ENCODE measurements at regions of chr6 and their contacts with region 1.

Region 1: GRCh38 chr6:25017932-25018567 is 82.3 kb upstream of the RIPOR2 start:
- DNase-seq: peak; percentile 93
- H3K4me3 Mint-ChIP-seq: peak overlapping the region; percentile 6
- H3K27ac Mint-ChIP-seq: peak overlapping the region; percentile 84
- H3K4me1 Mint-ChIP-seq: peaks cover 55% of the 10 kb centered on the region
- H3K27me3 Mint-ChIP-seq: no peaks in the 10 kb centered on the region

Region 2: DNA sequence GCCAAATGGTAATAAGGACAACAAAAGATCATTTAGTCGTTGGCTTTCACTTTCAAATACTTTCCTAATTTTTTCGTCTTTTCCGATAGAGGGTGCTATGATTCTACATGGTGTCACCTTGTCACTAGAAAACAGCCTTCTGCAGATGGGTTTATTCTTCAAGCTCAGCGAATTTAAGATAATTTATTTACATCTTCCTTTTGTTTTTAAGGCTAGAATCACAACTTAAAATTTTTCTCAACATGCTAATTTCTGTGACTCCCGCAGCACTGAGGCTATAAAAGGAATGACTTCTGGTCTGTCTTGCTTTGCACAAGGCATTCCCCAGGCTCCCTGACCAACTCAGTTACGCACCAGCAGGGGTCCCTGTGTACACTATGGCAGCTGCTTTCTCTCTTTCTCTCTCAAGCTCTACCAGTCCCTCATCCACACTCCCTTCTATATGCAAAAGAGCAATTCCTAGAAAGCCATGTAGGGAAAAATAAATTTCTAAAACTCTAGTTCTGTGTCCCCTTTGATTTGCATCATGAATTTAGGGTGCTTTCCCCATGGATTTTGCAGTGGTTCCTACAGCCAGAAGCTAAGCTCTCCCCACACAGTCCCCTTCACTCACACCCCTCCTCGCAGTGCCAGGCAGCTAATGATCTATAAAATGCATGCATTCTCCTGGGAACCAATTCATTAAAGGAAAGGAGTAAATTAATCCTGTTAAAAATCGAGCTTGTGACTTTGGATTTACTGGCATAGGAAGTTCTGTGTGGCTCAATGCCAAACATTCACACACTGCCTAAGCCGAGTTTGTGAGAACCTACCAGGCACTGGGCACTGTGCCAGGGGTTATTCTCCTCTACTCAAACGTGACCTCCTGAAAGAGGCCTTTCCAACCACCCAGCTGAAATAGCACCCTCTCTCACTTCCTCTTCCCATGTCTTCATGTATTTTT is 734.7 kb before region 1 on chr6:
- CTCF ChIA-PET with region 1: no interaction called
- intact Hi-C with region 1: loop called (anchors 5 kb)
- DNase-seq: peak; percentile 62
- H3K4me3 Mint-ChIP-seq: no peak overlapping the region
- H3K27ac Mint-ChIP-seq: no peak overlapping the region
- H3K4me1 Mint-ChIP-seq: peaks cover 6% of the 10 kb centered on the region
- H3K27me3 Mint-ChIP-seq: peaks cover 3% of the 10 kb centered on the region

Region 3: GRCh38 chr6:24520929-24521546 is 497.0 kb before region 1 on chr6:
- CTCF ChIA-PET with region 1: no interaction called
- intact Hi-C with region 1: loop called (anchors 10 kb)
- DNase-seq: peak; percentile 62
- H3K4me3 Mint-ChIP-seq: no peak overlapping the region
- H3K27ac Mint-ChIP-seq: no peak overlapping the region
- H3K4me1 Mint-ChIP-seq: peaks cover 8% of the 10 kb centered on the region
- H3K27me3 Mint-ChIP-seq: no peaks in the 10 kb centered on the region

Region 4: GRCh38 chr6:24699521-24700359 is 318.3 kb before region 1 on chr6:
- CTCF ChIA-PET with region 1: no interaction called
- intact Hi-C with region 1: loop called (anchors 1 kb)
- DNase-seq: no peak
- H3K4me3 Mint-ChIP-seq: no peak overlapping the region
- H3K27ac Mint-ChIP-seq: peak overlapping the region; percentile 84
- H3K4me1 Mint-ChIP-seq: peaks cover 45% of the 10 kb centered on the region
- H3K27me3 Mint-ChIP-seq: no peaks in the 10 kb centered on the region

Region 5: DNA sequence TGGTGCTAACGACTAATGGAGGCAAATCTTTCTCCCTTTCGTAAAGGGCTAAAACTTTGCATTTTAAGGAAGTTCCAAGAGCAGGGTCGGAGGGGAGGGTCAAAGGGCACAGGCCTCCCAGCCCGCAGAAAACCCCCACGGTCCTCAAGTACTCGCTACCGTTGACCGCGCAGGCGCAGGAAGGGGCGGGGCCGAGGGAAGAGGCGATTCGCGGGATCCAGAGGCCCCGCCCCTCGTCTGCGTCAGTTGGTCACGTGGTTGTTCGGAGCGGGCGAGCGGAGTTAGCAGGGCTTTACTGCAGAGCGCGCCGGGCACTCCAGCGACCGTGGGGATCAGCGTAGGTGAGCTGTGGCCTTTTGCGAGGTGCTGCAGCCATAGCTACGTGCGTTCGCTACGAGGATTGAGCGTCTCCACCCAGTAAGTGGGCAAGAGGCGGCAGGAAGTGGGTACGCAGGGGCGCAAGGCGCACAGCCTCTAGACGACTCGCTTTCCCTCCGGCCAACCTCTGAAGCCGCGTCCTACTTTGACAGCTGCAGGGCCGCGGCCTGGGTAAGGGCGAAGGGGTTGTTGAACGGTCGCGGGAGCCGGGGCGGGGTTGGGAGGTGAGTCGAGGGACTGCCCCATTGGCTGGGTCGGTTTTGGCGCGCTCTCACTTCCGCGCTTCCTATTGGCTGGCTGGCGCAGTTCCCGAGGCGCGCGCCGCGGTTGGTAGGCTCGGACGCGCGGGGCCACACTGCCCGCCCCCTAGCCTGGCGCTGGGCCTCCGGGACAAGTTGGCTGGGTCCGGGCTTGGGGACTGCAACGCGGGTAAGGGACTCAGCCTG is 243.1 kb before region 1 on chr6 and contains the start of gene GMNN:
- CTCF ChIA-PET with region 1: interaction called, 7 read pairs
- intact Hi-C with region 1: loop called (anchors 1 kb)
- DNase-seq: peak; percentile 99
- H3K4me3 Mint-ChIP-seq: peak within 1 kb of the TSS; percentile 96
- H3K27ac Mint-ChIP-seq: peak within 1 kb of the TSS; percentile 98
- H3K4me1 Mint-ChIP-seq: peaks cover 30% of the 10 kb centered on the region
- H3K27me3 Mint-ChIP-seq: no peaks in the 10 kb centered on the region
- total RNA-seq, gene GMNN: 84.9 to 85.1 TPM

Region 6: GRCh38 chr6:24910961-24911712 is 106.9 kb before region 1 on chr6:
- CTCF ChIA-PET with region 1: interaction called, 32 read pairs
- intact Hi-C with region 1: no loop called
- DNase-seq: peak; percentile 70
- H3K4me3 Mint-ChIP-seq: peak overlapping the region; percentile 92
- H3K27ac Mint-ChIP-seq: peak overlapping the region; percentile 96
- H3K4me1 Mint-ChIP-seq: peaks cover 76% of the 10 kb centered on the region
- H3K27me3 Mint-ChIP-seq: no peaks in the 10 kb centered on the region

Region 7: GRCh38 chr6:25006565-25007001 is 11.5 kb before region 1 on chr6:
- CTCF ChIA-PET with region 1: interaction called, 17 read pairs
- intact Hi-C with region 1: loop called (anchors 1 kb)
- DNase-seq: peak; percentile 72
- H3K4me3 Mint-ChIP-seq: peak overlapping the region; percentile 31
- H3K27ac Mint-ChIP-seq: peak overlapping the region; percentile 68
- H3K4me1 Mint-ChIP-seq: peaks cover 80% of the 10 kb centered on the region
- H3K27me3 Mint-ChIP-seq: no peaks in the 10 kb centered on the region

Measured in activated naive CD4-positive, alpha-beta T cell treated with anti-CD3 and anti-CD28 coated beads for 36 hours (primary cell).